Right lobe of liver (tissue), 6 donors: ENCODE measurements at regions of chr11 and their contacts with region 1.

Region 1: GRCh38 chr11:124421043-124421442 is 3.6 kb downstream of the OR8B4 start:
- DNase-seq: no peak
- ATAC-seq: no peak
- H3K4me3 ChIP-seq: no peak overlapping the region
- H3K27ac ChIP-seq: no peak overlapping the region
- H3K4me1 ChIP-seq: no peaks in the 10 kb centered on the region
- H3K27me3 ChIP-seq: no peaks in the 10 kb centered on the region
- CTCF ChIP-seq: no peak
- POLR2A ChIP-seq: no peak

Region 2: GRCh38 chr11:124592627-124593026 is 171.6 kb after region 1 on chr11:
- intact Hi-C with region 1: loop called (anchors 10 kb)
- DNase-seq: no peak
- ATAC-seq: no peak
- H3K4me3 ChIP-seq: no peak overlapping the region
- H3K27ac ChIP-seq: no peak overlapping the region
- H3K4me1 ChIP-seq: no peaks in the 10 kb centered on the region
- H3K27me3 ChIP-seq: peaks cover 0 to 4% of the 10 kb centered on the region in 2 donors
- CTCF ChIP-seq: no peak
- POLR2A ChIP-seq: no peak